ENCODE measurements at regions of chr19 and their contacts with region 1.

Region 1: GRCh38 chr19:1113033-1113985 is 9.5 kb downstream of the GPX4 start:
- DNase-seq: peak; percentile 94
- ATAC-seq: peak; percentile 93
- H3K4me3 ChIP-seq: no peak overlapping the region
- H3K27ac ChIP-seq: peak overlapping the region; percentile 74
- H3K4me1 ChIP-seq: peaks cover 11% of the 10 kb centered on the region
- H3K27me3 ChIP-seq: no peaks in the 10 kb centered on the region
- CTCF ChIP-seq: peak; percentile 82
- POLR2A ChIP-seq: no peak
- RAD21 ChIP-seq: peak; percentile 76

Region 2: GRCh38 chr19:679418-680286 is 433.7 kb before region 1 on chr19:
- CTCF ChIA-PET with region 1: no interaction called
- POLR2A ChIA-PET with region 1: no interaction called
- dilution Hi-C with region 1: no loop called
- in situ Hi-C with region 1: no loop called
- intact Hi-C with region 1: no loop called
- DNase-seq: peak; percentile 80
- ATAC-seq: peak; percentile 12
- H3K4me3 ChIP-seq: peak overlapping the region; percentile 72
- H3K27ac ChIP-seq: peak overlapping the region; percentile 78
- H3K4me1 ChIP-seq: peaks cover 18% of the 10 kb centered on the region
- H3K27me3 ChIP-seq: no peaks in the 10 kb centered on the region
- CTCF ChIP-seq: no peak
- POLR2A ChIP-seq: peak; percentile 66; the same call in 1 of the 2 replicates
- RAD21 ChIP-seq: no peak

Region 3: DNA sequence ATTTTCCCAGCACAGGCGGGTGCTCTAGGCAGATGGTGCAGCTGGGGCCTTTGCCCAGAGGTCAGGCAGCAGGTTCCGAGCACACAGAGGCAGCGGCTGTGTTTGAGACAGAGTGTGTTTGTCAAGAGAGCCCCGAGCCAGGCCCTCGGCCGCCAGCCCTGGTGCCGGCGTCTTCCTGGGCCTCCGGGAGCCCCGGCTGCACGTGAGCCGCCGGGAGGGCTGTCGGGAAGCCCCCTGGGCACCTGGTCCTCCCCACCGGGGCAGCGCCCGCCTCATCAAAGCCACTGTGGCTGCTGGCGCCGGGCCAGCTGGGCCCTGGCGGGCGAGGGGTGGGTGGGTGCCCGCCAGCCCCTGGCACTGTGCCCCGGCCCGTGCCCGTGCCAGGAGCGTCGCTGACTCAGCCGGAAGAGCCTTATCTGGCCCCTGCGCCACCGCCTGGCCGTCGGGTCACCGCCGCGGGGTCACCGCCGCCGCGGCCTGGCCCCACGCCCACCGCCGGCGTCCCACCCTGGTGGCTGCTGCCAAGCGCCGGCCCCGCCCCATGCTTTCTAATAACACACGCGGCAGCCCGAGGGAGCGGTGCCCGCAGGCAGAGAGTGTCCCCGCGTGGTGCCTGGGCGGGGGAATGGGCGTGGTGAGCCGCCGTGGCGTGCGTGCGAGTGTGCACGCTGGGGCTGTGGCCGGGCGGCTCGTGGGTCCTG is 172.6 kb before region 1 on chr19:
- CTCF ChIA-PET with region 1: no interaction called
- POLR2A ChIA-PET with region 1: no interaction called
- dilution Hi-C with region 1: no loop called
- in situ Hi-C with region 1: no loop called
- intact Hi-C with region 1: no loop called
- DNase-seq: peak; percentile 57
- ATAC-seq: peak; percentile 80
- H3K4me3 ChIP-seq: no peak overlapping the region
- H3K27ac ChIP-seq: peak overlapping the region; percentile 43
- H3K4me1 ChIP-seq: peaks cover 9% of the 10 kb centered on the region; the same call in 1 of the 2 replicates
- H3K27me3 ChIP-seq: no peaks in the 10 kb centered on the region
- CTCF ChIP-seq: no peak
- POLR2A ChIP-seq: no peak
- RAD21 ChIP-seq: no peak

Region 4: DNA sequence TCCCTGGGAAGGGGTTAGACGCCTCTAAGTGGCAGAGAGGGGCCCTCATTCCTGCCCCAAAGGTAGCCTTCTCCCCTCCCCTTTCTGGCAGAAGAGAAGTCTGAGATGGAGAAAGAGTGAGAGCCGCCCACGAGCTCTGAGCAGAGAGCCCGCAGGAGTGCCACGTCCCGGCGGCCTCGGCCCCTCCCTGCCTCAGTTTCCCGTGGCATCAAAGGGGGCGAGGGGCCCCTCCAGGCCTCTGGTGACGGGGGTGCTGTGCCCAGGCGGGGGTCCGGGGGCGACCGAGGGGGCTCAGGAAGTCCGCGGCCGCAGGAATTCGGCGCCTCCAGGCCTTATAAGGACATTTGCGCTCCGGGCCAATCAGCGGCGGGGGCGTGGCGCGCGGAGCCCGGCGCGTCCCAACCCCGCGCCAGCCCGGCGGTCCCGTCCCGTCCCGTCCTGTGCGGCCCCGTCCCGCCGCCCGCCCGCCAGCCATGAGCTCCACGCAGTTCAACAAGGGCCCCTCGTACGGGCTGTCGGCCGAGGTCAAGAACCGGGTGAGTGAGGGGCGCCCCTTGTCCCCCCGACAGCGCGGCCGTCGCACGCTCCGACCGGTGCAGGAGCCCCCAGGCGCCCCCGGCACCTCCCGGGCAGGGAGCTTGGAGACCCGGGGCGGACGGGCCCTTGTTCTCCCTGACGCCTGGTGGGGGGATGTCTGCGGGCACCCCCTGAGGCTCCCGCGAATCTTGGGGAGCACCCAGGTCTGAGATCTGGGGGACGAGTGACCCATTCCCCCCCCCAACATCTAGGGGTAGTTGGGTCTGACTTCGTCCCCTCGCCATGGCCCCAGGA is 86.9 kb before region 1 on chr19 and contains the start of gene CNN2:
- CTCF ChIA-PET with region 1: no interaction called
- POLR2A ChIA-PET with region 1: interaction called, 16 read pairs
- dilution Hi-C with region 1: no loop called
- in situ Hi-C with region 1: no loop called
- intact Hi-C with region 1: no loop called
- DNase-seq: peak; percentile 67
- ATAC-seq: peak; percentile 80
- H3K4me3 ChIP-seq: peak within 1 kb of the TSS; percentile 93
- H3K27ac ChIP-seq: peak within 1 kb of the TSS; percentile 100
- H3K4me1 ChIP-seq: peaks cover 16% of the 10 kb centered on the region
- H3K27me3 ChIP-seq: no peaks in the 10 kb centered on the region
- CTCF ChIP-seq: no peak
- POLR2A ChIP-seq: peak; percentile 76
- RAD21 ChIP-seq: no peak
- total RNA-seq, gene CNN2: 270 and 272 TPM in 2 replicates

Region 5: GRCh38 chr19:1039646-1040475 is 73.4 kb before region 1 on chr19 and contains the start of gene ABCA7:
- CTCF ChIA-PET with region 1: no interaction called
- POLR2A ChIA-PET with region 1: no interaction called
- dilution Hi-C with region 1: no loop called
- in situ Hi-C with region 1: no loop called
- intact Hi-C with region 1: no loop called
- DNase-seq: peak; percentile 96
- ATAC-seq: peak; percentile 85
- H3K4me3 ChIP-seq: peak within 1 kb of the TSS; percentile 44
- H3K27ac ChIP-seq: no peak within 1 kb of the TSS
- H3K4me1 ChIP-seq: peaks cover 7% of the 10 kb centered on the region; the same call in 1 of the 2 replicates
- H3K27me3 ChIP-seq: no peaks in the 10 kb centered on the region
- CTCF ChIP-seq: no peak
- POLR2A ChIP-seq: peak; percentile 73
- RAD21 ChIP-seq: no peak; the same call in 1 of the 2 replicates
- total RNA-seq, gene ABCA7: 0.36 and 0.56 TPM in 2 replicates

Region 6: GRCh38 chr19:1131738-1132551 is 18.6 kb after region 1 on chr19:
- CTCF ChIA-PET with region 1: interaction called, 10 read pairs
- POLR2A ChIA-PET with region 1: interaction called, 10 read pairs
- dilution Hi-C with region 1: no loop called
- in situ Hi-C with region 1: no loop called
- intact Hi-C with region 1: no loop called
- DNase-seq: peak; percentile 88
- ATAC-seq: peak; percentile 82
- H3K4me3 ChIP-seq: peak overlapping the region; percentile 61
- H3K27ac ChIP-seq: peak overlapping the region; percentile 95
- H3K4me1 ChIP-seq: peaks cover 24% of the 10 kb centered on the region
- H3K27me3 ChIP-seq: no peaks in the 10 kb centered on the region
- CTCF ChIP-seq: peak; percentile 14; the same call in 1 of the 2 replicates
- POLR2A ChIP-seq: peak; percentile 77; the same call in 1 of the 2 replicates
- RAD21 ChIP-seq: 0 out of 2 replicates have a peak, but pooled peaks have one; percentile 5

Region 7: GRCh38 chr19:1173845-1174809 is 60.8 kb after region 1 on chr19 and contains the start of gene SBNO2:
- CTCF ChIA-PET with region 1: interaction called, 5 read pairs
- POLR2A ChIA-PET with region 1: no interaction called
- dilution Hi-C with region 1: no loop called
- in situ Hi-C with region 1: no loop called
- intact Hi-C with region 1: loop called (anchors 2 kb)
- DNase-seq: peak; percentile 80
- ATAC-seq: peak; percentile 56
- H3K4me3 ChIP-seq: peak within 1 kb of the TSS; percentile 92
- H3K27ac ChIP-seq: peak within 1 kb of the TSS; percentile 99
- H3K4me1 ChIP-seq: peaks cover 37% of the 10 kb centered on the region
- H3K27me3 ChIP-seq: no peaks in the 10 kb centered on the region
- CTCF ChIP-seq: no peak
- POLR2A ChIP-seq: peak; percentile 90
- RAD21 ChIP-seq: no peak
- total RNA-seq, gene SBNO2: 13.4 and 13.6 TPM in 2 replicates

Region 8: DNA sequence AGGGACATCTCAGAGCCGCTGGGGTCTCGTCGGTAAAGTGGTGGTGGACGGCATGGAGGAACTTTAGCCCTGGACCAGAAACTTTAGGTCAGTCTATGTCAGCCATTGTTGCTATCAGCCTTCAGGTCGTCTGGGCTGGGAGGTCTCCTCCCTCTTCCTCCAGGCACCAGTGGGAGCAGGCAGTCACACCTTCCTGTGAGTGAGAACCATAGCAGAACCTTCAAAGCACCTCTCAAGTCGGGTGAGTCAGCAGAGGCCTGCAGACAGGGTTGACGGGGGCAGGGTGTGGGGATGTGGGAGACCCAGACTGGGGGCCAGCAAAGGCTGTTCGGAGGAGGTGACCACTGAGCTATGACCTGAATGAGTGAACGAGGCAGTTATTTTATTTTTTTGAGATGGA is 76.1 kb after region 1 on chr19:
- CTCF ChIA-PET with region 1: interaction called, 12 read pairs
- POLR2A ChIA-PET with region 1: interaction called, 5 read pairs
- dilution Hi-C with region 1: no loop called
- in situ Hi-C with region 1: no loop called
- intact Hi-C with region 1: loop called (anchors 5 kb)
- DNase-seq: peak; percentile 35
- ATAC-seq: no peak
- H3K4me3 ChIP-seq: no peak overlapping the region
- H3K27ac ChIP-seq: no peak overlapping the region
- H3K4me1 ChIP-seq: 0 out of 2 replicates have a peak, but pooled peaks cover 2% of the 10 kb centered on the region
- H3K27me3 ChIP-seq: no peaks in the 10 kb centered on the region
- CTCF ChIP-seq: no peak
- POLR2A ChIP-seq: no peak
- RAD21 ChIP-seq: no peak

Measured in IMR-90 (cell line).